HEK293 (cell line): ENCODE measurements at regions of chr18 and their contacts with region 1.

Region 1: DNA sequence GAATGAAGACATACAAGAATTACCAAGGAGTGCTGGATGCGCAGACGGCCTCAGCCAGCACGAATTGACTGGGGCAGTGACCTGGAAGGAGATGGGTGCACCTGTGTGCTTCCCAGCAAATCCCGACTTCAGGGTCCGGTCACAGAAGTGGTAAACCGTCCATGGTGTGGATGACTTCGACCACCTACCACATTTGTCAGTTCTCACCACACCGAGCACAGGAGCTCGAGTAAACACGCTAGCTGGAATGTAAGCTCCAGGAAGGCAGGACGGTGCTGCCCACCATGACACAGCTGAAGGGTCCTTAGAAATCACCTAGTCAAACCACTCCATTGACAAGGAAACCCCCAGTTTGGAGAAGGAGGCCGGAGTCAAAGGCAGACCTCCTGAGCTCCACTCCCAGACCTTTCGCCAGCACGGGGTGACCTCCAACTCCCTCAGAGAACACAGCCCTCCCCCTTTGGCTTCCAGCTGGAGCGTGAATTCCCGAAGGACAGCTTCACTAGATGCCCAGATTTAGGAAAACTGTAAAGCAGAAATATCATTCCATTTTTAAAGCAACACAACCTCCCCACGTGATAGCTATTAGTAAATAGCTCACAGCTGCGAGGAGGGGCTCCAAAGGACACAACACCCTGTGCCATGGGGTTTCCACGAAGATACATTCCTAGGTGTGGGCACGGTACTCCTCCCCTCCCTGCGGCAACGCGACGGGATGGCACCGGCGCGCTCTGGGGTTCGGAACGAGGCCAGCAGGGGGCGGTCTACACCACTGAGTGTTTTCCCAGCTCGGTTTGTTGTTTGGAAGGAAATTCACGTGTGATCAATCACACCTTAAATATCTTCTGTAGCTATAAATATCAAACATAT is 34.1 kb upstream of the GNAL start:
- H3K4me3 ChIP-seq: no peak overlapping the region
- H3K27ac ChIP-seq: no peak overlapping the region
- H3K4me1 ChIP-seq: no peaks in the 10 kb centered on the region
- CTCF ChIP-seq: peak; percentile 80

Region 2: DNA sequence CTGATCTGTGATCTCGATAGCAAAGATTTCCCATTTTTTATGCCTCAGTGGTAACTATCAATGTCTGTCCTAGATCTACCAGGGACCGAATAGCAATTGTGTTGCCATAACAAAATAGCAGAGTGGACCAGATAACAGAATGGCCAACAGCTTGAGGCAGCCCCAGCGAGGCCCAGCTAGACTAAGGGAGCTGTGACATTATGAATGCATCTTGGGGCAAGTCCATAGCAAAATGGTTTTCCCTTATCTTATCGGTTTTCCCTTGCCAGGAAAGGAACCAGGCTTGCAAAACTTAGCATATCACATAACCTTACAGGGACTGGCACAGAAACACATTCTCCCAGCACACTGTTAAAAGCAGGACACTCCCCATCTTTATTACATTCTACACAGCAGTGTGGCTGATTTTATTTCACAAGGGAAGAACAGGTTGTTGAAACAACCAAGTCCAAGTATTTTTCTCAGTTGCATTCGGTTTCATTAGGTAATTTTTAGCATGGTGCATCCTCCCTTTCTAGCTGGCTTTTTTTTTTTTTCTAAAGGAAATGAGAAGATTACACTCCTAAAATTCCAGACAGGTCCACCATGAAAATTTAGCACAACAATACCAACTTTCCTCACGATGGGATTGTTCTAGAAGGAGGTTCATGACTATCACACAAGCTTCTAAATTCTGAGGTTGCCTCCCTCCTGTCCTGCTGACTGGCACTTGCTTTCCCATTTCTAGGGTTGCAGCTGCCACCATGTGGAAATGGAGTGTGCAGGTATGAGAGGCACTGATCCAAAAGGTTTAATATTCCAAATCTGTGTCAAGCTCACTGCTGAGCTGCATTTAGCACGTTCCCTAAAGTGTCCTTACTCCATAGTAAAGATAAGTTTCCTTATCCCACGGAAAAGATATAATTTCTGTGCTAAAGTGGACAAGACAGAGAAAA is 142.6 kb before region 1 on chr18:
- CTCF ChIA-PET with region 1: no interaction called
- POLR2A ChIA-PET with region 1: no interaction called
- H3K4me3 ChIP-seq: no peak overlapping the region
- H3K27ac ChIP-seq: no peak overlapping the region
- H3K4me1 ChIP-seq: no peaks in the 10 kb centered on the region
- CTCF ChIP-seq: peak; percentile 55; the same call in 1 of the 2 replicates

Region 3: DNA sequence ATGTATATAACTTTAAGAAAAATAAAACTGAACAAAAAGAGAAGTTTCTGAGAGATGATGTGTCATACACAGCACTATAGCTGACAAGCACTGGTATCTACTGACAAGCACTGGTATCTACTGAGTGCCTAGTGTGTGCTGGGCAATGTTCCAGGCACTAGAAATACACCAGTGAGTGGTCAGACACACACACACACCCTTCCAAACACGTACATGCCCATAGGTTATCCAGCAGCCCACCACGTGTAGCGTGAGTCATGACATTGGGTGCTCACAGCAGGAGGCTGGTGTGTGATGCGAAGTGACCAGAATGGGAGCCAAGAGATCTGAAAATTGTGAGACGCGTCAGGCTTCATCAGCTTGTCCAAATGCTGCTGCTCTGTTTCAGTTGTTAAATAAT is 21.9 kb after region 1 on chr18:
- CTCF ChIA-PET with region 1: interaction called, 15 read pairs
- POLR2A ChIA-PET with region 1: no interaction called
- H3K4me3 ChIP-seq: no peak overlapping the region
- H3K27ac ChIP-seq: no peak overlapping the region
- H3K4me1 ChIP-seq: no peaks in the 10 kb centered on the region
- CTCF ChIP-seq: no peak

Region 4: DNA sequence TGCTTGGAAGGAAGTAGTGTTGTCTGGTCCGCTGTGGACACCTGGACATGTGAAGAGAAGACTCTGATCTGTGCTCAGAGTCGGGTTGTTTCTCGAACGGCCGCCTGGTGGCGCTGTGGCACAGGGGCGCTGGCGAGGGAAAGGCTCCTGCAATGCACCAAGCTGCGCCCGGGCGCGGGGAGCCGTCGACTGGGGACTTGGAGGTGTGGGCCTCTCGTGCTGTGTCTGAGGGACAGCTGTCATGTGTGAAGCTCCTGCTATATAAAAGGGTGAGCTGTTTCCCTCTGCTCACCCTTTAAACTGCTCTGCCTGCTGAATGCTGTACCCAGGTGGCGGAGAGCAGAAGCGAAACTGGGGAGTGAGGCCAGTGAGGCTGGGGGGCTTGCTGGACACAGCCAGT is 78.1 kb after region 1 on chr18:
- CTCF ChIA-PET with region 1: interaction called, 112 read pairs
- POLR2A ChIA-PET with region 1: no interaction called
- H3K4me3 ChIP-seq: no peak overlapping the region; the same call in 1 of the 2 replicates
- H3K27ac ChIP-seq: no peak overlapping the region
- H3K4me1 ChIP-seq: no peaks in the 10 kb centered on the region
- CTCF ChIP-seq: peak; percentile 91

Region 5: GRCh38 chr18:11849841-11850634 is 195.1 kb after region 1 on chr18:
- CTCF ChIA-PET with region 1: interaction called, 10 read pairs
- POLR2A ChIA-PET with region 1: no interaction called
- H3K4me3 ChIP-seq: peak overlapping the region; percentile 41
- H3K27ac ChIP-seq: peak overlapping the region; percentile 58
- H3K4me1 ChIP-seq: peaks cover 8% of the 10 kb centered on the region; the same call in 1 of the 2 replicates
- CTCF ChIP-seq: peak; percentile 34

Region 6: DNA sequence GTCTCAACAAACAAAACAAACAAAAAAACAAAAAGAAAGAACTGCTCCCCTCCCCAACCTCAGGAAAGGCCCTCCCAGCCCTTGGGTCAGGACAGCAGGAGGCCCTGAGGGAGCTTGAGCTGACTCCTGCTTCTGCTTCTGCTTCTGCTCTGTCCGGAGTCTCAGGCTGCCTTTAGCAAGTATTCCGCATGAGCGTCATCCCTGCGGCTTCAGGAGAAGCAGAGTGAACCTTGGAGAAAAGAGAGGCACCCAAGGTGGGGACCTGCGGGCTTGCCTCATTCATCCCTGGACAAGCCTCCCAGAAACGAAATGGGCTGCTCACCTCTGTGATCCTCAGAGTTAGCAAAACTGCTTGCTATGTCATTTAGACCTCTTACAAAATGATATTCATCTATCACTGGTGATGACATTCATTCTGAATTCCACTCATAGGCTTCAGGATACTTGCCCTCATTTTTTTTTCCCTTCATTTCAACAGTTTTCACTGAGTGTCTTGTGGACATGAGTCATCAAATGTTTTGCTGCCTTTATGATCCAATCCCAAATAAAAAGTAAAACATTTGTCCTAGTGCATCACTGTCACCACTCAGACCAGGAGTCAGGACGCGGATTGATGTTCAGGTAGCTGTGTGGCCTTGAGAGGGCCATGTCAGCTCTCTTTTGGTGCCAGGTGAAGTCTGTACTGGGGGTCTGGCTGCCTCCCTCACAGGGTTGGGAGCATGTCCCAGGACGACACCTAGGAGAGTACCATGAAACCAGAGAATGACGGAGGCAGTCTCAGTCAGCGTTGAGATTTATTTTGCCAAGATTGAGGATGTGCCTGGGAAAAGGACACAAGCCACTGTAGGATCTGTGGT is 378.0 kb after region 1 on chr18:
- CTCF ChIA-PET with region 1: interaction called, 23 read pairs
- POLR2A ChIA-PET with region 1: no interaction called
- H3K4me3 ChIP-seq: no peak overlapping the region
- H3K27ac ChIP-seq: no peak overlapping the region
- H3K4me1 ChIP-seq: no peaks in the 10 kb centered on the region
- CTCF ChIP-seq: no peak